GM12878 (cell line): ENCODE measurements at regions of chr12 and their contacts with region 1.

Region 1: DNA sequence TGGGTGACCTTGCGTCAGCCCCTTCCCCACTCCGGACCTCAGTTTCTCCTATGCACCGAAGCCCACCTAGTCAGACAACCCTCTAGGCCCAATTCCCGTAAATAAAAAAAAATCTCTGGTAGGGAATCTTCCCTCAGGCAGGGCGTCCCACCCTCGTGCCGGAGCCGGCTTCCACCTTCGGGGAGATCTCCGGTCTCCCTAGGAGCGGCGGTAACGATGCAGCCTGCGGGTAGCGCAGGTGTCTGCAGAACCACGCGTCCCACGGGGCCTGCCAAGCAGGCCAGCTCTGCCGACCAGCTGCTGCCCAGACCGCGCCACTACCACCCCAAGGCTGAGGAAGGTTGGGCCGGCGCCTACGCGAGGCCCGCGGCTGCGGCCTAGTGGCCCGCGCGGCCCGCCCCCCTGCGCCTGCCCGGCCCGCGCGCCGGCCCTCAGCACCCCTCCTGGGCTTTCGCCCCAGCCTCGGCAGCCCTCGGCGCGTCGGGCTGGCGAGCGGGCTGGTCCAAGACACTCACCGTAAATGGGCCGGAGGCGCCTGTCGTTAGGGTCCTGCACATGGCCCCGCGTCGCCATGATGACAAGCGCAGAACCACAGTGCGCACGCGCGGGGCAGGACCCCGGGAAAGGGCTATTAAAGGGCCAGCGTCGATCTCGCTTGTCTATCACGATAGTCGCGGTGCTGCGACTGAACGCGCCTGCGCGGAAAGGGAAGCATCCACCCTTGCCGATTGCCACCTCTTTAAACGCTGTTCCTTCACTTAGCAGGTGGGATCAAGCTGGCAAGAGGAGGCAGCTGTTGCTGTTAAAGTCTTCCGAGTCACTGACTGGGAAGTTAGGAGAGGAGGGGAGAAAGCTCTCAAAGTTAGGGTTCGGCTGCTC is at the start of gene NAA25:
- DNase-seq: no peak
- ATAC-seq: peak; percentile 82
- H3K4me3 ChIP-seq: peak within 1 kb of the TSS; percentile 100
- H3K27ac ChIP-seq: peak within 1 kb of the TSS; percentile 98
- H3K4me1 ChIP-seq: peaks cover 8% of the 10 kb centered on the region; the same call in 1 of the 2 replicates
- H3K27me3 ChIP-seq: no peaks in the 10 kb centered on the region
- CTCF ChIP-seq: no peak
- EP300 ChIP-seq: no peak
- POLR2A ChIP-seq: peak; percentile 86
- RAD21 ChIP-seq: no peak
- polyA plus RNA-seq, gene NAA25: 15.0 to 32.1 TPM

Region 2: DNA sequence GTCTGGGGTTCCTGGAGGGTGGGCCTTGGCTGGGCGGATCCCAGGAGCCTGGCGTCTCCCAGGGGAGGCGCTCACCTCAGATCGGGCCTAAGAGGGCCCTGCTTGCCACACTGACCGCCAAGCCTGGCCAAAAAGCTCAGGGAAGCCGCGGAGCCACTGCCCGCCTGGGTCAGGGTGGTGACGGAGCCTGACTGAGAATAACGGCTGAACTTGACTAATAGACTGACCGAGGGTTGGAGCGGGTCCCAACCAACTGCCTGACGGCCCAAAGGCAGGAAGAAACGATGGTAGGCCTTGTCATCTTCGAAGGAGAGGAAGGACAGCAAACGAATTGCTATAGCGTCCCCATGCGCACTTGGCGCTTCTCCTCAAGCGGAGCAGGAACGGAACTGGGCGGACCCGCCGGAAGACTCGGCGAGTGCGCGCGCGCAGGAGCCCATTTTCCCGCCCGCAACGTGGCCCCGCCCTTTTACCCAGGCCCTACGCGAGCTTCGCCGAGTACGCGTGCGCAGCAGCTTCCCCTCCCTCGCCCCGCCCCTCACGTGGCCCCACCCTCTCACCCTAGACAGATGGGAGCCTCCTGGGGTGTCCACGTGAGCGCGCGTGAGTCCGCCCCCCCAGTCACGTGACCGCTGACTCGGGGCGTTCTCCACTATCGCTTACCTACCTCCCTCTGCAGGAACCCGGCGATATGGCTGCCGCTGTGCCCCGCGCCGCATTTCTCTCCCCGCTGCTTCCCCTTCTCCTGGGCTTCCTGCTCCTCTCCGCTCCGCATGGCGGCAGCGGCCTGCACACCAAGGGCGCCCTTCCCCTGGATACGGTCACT is 95.5 kb before region 1 on chr12 and contains the starts of genes ERP29 and TMEM116:
- CTCF ChIA-PET with region 1: no interaction called
- POLR2A ChIA-PET with region 1: interaction called, 16 read pairs
- RAD21 ChIA-PET with region 1: interaction called, 10 read pairs
- SMC1A ChIA-PET with region 1: interaction called, 6 read pairs
- in situ Hi-C with region 1: no loop called
- intact Hi-C with region 1: no loop called
- DNase-seq: peak; percentile 98
- ATAC-seq: peak; percentile 82
- H3K4me3 ChIP-seq: peak within 1 kb of the TSS; percentile 97
- H3K27ac ChIP-seq: peak within 1 kb of the TSS; percentile 97
- H3K4me1 ChIP-seq: peaks cover 16% of the 10 kb centered on the region; the same call in 1 of the 2 replicates
- H3K27me3 ChIP-seq: no peaks in the 10 kb centered on the region
- CTCF ChIP-seq: peak; percentile 45 to 58 (median 50); a peak in 5 of 6 replicates
- EP300 ChIP-seq: 0 out of 4 replicates have a peak, but pooled peaks of 1 of the 2 experiments have one; percentile 10
- POLR2A ChIP-seq: peak; percentile 89
- RAD21 ChIP-seq: peak; percentile 34
- polyA plus RNA-seq, gene ERP29: 47.1 to 119 TPM
- polyA plus RNA-seq, gene TMEM116: 7.9 to 13.5 TPM

Region 3: GRCh38 chr12:112096667-112097066 is 11.8 kb before region 1 on chr12:
- CTCF ChIA-PET with region 1: interaction called, 19 read pairs
- POLR2A ChIA-PET with region 1: interaction called, 34 read pairs
- RAD21 ChIA-PET with region 1: interaction called, 35 read pairs
- SMC1A ChIA-PET with region 1: interaction called, 35 read pairs
- in situ Hi-C with region 1: no loop called
- intact Hi-C with region 1: no loop called
- DNase-seq: no peak
- ATAC-seq: peak; percentile 67
- H3K4me3 ChIP-seq: peak overlapping the region; percentile 29; the same call in 1 of the 2 replicates
- H3K27ac ChIP-seq: peak overlapping the region; percentile 75
- H3K4me1 ChIP-seq: peaks cover 20% of the 10 kb centered on the region
- H3K27me3 ChIP-seq: no peaks in the 10 kb centered on the region
- CTCF ChIP-seq: no peak
- EP300 ChIP-seq: no peak
- POLR2A ChIP-seq: no peak
- RAD21 ChIP-seq: no peak

Region 4: GRCh38 chr12:112125250-112125999 is 17.0 kb after region 1 on chr12 and contains the start of gene TRAFD1:
- CTCF ChIA-PET with region 1: interaction called, 12 read pairs
- POLR2A ChIA-PET with region 1: interaction called, 161 read pairs
- RAD21 ChIA-PET with region 1: interaction called, 59 read pairs
- SMC1A ChIA-PET with region 1: interaction called, 72 read pairs
- in situ Hi-C with region 1: no loop called
- intact Hi-C with region 1: loop called (anchors 2 kb)
- DNase-seq: peak; percentile 92
- ATAC-seq: peak; percentile 99
- H3K4me3 ChIP-seq: peak within 1 kb of the TSS; percentile 98
- H3K27ac ChIP-seq: peak within 1 kb of the TSS; percentile 72
- H3K4me1 ChIP-seq: peaks cover 19% of the 10 kb centered on the region
- H3K27me3 ChIP-seq: no peaks in the 10 kb centered on the region
- CTCF ChIP-seq: no peak
- EP300 ChIP-seq: no peak
- POLR2A ChIP-seq: peak; percentile 100
- RAD21 ChIP-seq: no peak
- polyA plus RNA-seq, gene TRAFD1: 42.3 to 43.8 TPM